ENCODE measurements at regions of chr3 and their contacts with region 1.

Region 1: DNA sequence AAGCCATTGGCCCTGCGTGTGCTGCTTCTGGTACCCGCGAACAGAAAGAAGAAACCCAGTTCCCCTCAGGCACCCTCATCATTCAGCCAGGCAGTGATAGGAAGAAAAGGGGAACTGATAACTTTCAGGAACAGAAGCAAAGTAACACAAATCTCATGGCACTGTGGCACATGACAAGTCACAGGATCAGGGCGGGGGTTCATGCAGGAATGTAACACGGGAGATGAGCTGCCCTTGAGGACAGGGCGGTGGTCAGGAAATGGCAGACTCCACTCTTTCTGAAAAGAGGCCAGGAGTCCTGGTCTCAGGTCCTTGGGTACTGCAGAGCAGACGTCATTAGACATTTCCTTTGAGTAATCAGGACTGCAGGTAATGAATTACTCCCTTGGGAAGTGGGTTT is 95.5 kb downstream of the CCNL1 start:
- DNase-seq: peak; percentile 48
- ATAC-seq: peak; percentile 81
- H3K4me3 ChIP-seq: no peak overlapping the region
- H3K27ac ChIP-seq: peak overlapping the region; percentile 48; the same call in 1 of the 2 replicates
- H3K4me1 ChIP-seq: peaks cover 38% of the 10 kb centered on the region
- H3K27me3 ChIP-seq: no peaks in the 10 kb centered on the region
- CTCF ChIP-seq: no peak
- EP300 ChIP-seq: peak; percentile 46 to 59; a peak in 2 of 4 replicates
- POLR2A ChIP-seq: no peak
- RAD21 ChIP-seq: 0 out of 2 replicates have a peak, but pooled peaks have one; percentile 14

Region 2: GRCh38 chr3:156865732-156866131 is 198.7 kb before region 1 on chr3:
- CTCF ChIA-PET with region 1: no interaction called
- POLR2A ChIA-PET with region 1: no interaction called
- RAD21 ChIA-PET with region 1: no interaction called
- SMC1A ChIA-PET with region 1: no interaction called
- in situ Hi-C with region 1: no loop called
- intact Hi-C with region 1: no loop called
- DNase-seq: no peak
- ATAC-seq: no peak
- H3K4me3 ChIP-seq: no peak overlapping the region
- H3K27ac ChIP-seq: no peak overlapping the region
- H3K4me1 ChIP-seq: no peaks in the 10 kb centered on the region
- H3K27me3 ChIP-seq: no peaks in the 10 kb centered on the region
- CTCF ChIP-seq: peak in 1 of 3 experiments; percentile 11; a peak in 1 of 6 replicates
- EP300 ChIP-seq: no peak
- POLR2A ChIP-seq: no peak
- RAD21 ChIP-seq: 0 out of 2 replicates have a peak, but pooled peaks have one; percentile 15

Region 3: GRCh38 chr3:156943430-156943829 is 121.0 kb before region 1 on chr3:
- CTCF ChIA-PET with region 1: no interaction called
- POLR2A ChIA-PET with region 1: no interaction called
- RAD21 ChIA-PET with region 1: no interaction called
- SMC1A ChIA-PET with region 1: no interaction called
- in situ Hi-C with region 1: no loop called
- intact Hi-C with region 1: no loop called
- DNase-seq: no peak
- ATAC-seq: no peak
- H3K4me3 ChIP-seq: no peak overlapping the region
- H3K27ac ChIP-seq: no peak overlapping the region
- H3K4me1 ChIP-seq: no peaks in the 10 kb centered on the region
- H3K27me3 ChIP-seq: no peaks in the 10 kb centered on the region
- CTCF ChIP-seq: no peak
- EP300 ChIP-seq: no peak
- POLR2A ChIP-seq: no peak
- RAD21 ChIP-seq: no peak

Region 4: GRCh38 chr3:156957715-156958114 is 106.7 kb before region 1 on chr3:
- CTCF ChIA-PET with region 1: interaction called, 6 read pairs
- POLR2A ChIA-PET with region 1: no interaction called
- RAD21 ChIA-PET with region 1: interaction called, 3 read pairs
- SMC1A ChIA-PET with region 1: interaction called, 7 read pairs
- in situ Hi-C with region 1: no loop called
- intact Hi-C with region 1: loop called (anchors 2 kb)
- DNase-seq: peak; percentile 54
- ATAC-seq: peak; percentile 100
- H3K4me3 ChIP-seq: 0 out of 2 replicates have a peak overlapping the region, but pooled peaks have one; percentile 1
- H3K27ac ChIP-seq: peak overlapping the region; percentile 22; the same call in 1 of the 2 replicates
- H3K4me1 ChIP-seq: peaks cover 12% of the 10 kb centered on the region
- H3K27me3 ChIP-seq: no peaks in the 10 kb centered on the region
- CTCF ChIP-seq: no peak
- EP300 ChIP-seq: peak; percentile 50 to 53; a peak in 2 of 4 replicates
- POLR2A ChIP-seq: no peak
- RAD21 ChIP-seq: peak; percentile 9; the same call in 1 of the 2 replicates